A549 (cell line): ENCODE measurements at regions of chr19 and their contacts with region 1.

Region 1: DNA sequence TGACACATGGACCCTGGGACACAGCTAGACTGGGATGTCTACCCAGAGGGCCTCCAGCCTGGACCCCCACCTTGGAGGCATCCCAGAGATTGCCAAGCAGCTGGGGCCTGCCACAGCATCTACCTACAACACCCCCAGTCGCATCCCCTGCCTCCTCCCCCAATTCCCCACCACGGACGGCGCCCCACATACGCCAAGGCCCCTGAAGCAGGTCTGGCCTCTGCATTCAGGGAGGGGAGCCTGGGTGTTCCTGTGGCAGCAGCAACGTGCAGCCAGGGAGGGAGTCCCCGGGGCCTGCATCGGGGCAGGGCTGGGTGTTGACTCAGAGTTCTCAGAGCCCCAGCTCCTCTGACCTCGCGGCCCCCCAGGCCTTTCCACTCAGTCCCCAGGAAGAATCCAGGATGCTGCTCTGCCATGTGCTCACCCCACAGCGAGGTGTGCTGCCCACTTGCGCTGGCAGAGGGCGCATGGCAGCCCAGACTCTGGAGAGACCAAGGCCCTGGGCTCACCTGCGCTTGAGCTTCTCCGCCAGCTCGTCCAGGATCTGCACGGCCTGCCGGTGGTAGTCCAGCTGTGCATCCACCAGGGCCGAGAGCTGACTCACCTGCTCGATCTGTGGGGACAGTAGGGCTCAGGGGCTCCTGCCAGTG is 19.6 kb downstream of the MPND start:
- DNase-seq: peak in 1 of 2 experiments; percentile 47
- ATAC-seq: peak; percentile 48 to 68; a peak in 5 of 6 replicates
- H3K4me3 ChIP-seq: no peak overlapping the region
- H3K27ac ChIP-seq: peak overlapping the region in 1 of 2 experiments; percentile 59; a peak in 2 of 6 replicates
- H3K4me1 ChIP-seq: peaks cover 14% of the 10 kb centered on the region
- CTCF ChIP-seq: peak; percentile 32; the same call in 2 of the 3 replicates
- EP300 ChIP-seq: no peak
- POLR2A ChIP-seq: no peak
- RAD21 ChIP-seq: peak; percentile 17 to 19; a peak in 1 of 5 replicates

Region 2: DNA sequence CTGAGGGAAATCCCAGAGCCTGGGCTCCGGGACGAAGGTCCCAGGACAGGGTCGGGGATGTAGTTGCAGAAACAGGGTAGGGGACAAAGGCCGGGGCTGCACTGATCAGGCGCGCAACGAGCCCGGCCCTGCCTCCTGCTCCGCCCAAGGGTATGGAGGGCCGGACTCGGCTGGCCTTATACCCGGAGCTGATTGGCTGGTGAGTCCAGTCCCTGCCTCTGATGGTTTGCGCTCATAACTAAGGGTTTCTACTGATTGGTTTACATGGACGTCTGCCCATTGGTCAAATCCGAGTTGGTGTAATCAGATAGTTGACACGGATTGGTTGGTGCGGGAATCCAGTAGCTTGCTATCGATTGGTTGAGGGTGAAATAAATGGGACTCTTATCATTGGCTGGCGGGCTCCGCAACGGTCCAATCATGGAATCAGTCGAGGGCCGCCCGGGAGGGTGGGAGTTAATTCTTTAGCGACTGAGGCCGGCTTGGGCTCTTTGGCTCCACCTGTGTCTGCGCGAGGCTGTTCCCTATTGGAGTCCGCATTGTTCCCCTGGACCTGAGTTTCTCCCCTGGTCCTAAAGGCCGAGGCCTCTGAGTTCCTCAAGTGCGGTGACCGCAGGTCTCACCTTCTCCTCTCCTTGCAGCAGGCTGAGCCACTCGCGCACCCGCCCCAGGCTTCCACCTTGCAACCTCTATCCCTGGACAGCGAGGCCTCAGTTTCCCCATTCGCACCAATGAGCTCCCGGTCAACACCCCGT is 20.2 kb before region 1 on chr19:
- CTCF ChIA-PET with region 1: interaction called, 11 read pairs
- POLR2A ChIA-PET with region 1: interaction called, 3 read pairs
- DNase-seq: peak; percentile 88 to 100
- ATAC-seq: peak; percentile 90 to 97
- H3K4me3 ChIP-seq: peak overlapping the region; percentile 58
- H3K27ac ChIP-seq: peak overlapping the region; percentile 92 to 95
- H3K4me1 ChIP-seq: peaks cover 8% of the 10 kb centered on the region; the same call in 1 of the 3 replicates
- CTCF ChIP-seq: no peak
- EP300 ChIP-seq: no peak
- POLR2A ChIP-seq: peak; percentile 75
- RAD21 ChIP-seq: no peak

Region 3: DNA sequence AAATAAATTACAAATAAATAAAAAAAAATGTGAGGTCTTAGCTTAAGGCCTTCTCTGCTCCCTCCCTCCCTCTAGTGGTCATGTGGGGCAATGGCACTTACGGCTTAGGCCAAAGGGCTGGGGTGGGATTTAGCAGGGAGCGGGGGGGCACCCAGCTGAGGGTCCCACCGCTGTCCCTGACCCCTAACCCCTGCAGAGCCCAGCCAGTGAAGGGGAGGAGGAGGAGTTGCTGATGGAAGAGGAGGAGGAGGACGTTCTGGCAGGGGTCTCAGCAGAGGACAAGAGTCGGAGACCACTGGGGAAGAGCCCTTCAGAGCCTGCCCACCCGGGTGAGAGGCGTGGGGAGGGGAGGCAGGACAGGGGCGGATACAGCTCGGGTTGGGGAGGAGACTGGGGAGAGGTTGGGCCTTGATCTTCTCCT is 10.3 kb before region 1 on chr19:
- CTCF ChIA-PET with region 1: interaction called, 35 read pairs
- POLR2A ChIA-PET with region 1: interaction called, 3 read pairs
- DNase-seq: peak; percentile 51 to 66
- ATAC-seq: peak in 1 of 2 experiments; percentile 74; a peak in 4 of 6 replicates
- H3K4me3 ChIP-seq: no peak overlapping the region
- H3K27ac ChIP-seq: no peak overlapping the region
- H3K4me1 ChIP-seq: no peaks in the 10 kb centered on the region
- CTCF ChIP-seq: peak; percentile 66
- EP300 ChIP-seq: no peak
- POLR2A ChIP-seq: no peak
- RAD21 ChIP-seq: peak; percentile 35 to 39; a peak in 3 of 5 replicates

Region 4: GRCh38 chr19:4375164-4376027 is 12.4 kb after region 1 on chr19:
- CTCF ChIA-PET with region 1: interaction called, 11 read pairs
- POLR2A ChIA-PET with region 1: no interaction called
- DNase-seq: peak in 1 of 2 experiments; percentile 60
- ATAC-seq: peak; percentile 48 to 68
- H3K4me3 ChIP-seq: no peak overlapping the region
- H3K27ac ChIP-seq: peak overlapping the region; percentile 99
- H3K4me1 ChIP-seq: peaks cover 68% of the 10 kb centered on the region
- CTCF ChIP-seq: no peak
- EP300 ChIP-seq: no peak
- POLR2A ChIP-seq: no peak
- RAD21 ChIP-seq: no peak